ENCODE measurements at regions of chr7 and their contacts with region 1.

Region 1: GRCh38 chr7:77935652-77936348 is 137.2 kb downstream of the PHTF2 start:
- DNase-seq: no peak
- ATAC-seq: no peak
- H3K4me3 Mint-ChIP-seq: no peak overlapping the region
- H3K27ac Mint-ChIP-seq: no peak overlapping the region
- H3K4me1 Mint-ChIP-seq: peaks cover 5% of the 10 kb centered on the region
- H3K27me3 Mint-ChIP-seq: no peaks in the 10 kb centered on the region

Region 2: GRCh38 chr7:77798394-77799077 is 137.3 kb before region 1 on chr7 and contains the starts of genes PHTF2 and TMEM60:
- CTCF ChIA-PET with region 1: interaction called, 15 read pairs
- DNase-seq: peak; percentile 98
- ATAC-seq: peak; percentile 91
- H3K4me3 Mint-ChIP-seq: peak within 1 kb of the TSS; percentile 93
- H3K27ac Mint-ChIP-seq: peak within 1 kb of the TSS; percentile 91
- H3K4me1 Mint-ChIP-seq: peaks cover 61% of the 10 kb centered on the region
- H3K27me3 Mint-ChIP-seq: no peaks in the 10 kb centered on the region
- total RNA-seq, gene PHTF2: 41.5 to 56.4 TPM
- total RNA-seq, gene TMEM60: 13.2 to 19.4 TPM

Measured in activated CD8-positive, alpha-beta memory T cell treated with anti-CD3 and anti-CD28 coated beads, Interleukin-2, amount 10 ng/mL, durations not matched to agents 7 days and 5 days (primary cell).